Posterior vena cava (tissue), 2 donors: ENCODE measurements at regions of chr17 and their contacts with region 1.

Region 1: DNA sequence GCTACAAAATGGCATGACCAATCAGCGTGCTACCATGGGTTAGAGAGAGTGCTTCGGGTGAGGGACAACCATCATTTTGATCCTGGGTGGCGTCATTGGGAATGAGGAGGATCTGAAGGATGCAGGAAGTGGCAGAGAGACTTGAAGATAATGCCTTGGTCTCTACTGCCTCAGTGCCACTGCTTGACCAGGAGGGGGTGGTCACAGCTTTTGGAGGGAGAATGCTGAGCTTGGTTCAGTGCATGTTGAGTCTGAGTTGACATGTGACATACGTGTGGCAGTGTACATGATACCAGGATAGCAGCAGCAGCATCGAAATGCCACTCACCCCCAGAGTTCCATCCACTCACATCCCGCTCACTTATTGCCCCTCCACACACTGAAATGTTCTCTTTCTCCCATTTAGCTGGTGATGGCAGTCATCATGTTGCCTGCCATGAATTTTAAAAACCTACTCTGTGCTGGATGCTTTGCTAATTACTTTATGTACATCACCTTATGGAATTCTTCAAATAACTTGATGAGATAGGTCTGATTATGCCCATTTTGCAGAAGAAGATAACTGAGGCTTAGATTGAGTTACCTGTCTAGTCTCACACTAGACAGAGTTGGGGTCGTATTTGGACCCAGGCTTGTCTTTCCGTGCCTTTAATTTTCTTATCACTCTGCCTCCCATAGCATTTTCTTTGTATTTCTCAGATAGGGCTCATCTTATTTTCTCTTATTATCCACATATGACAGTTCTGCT is 36.7 kb downstream of the ARSG start:
- DNase-seq: no peak

Region 2: DNA sequence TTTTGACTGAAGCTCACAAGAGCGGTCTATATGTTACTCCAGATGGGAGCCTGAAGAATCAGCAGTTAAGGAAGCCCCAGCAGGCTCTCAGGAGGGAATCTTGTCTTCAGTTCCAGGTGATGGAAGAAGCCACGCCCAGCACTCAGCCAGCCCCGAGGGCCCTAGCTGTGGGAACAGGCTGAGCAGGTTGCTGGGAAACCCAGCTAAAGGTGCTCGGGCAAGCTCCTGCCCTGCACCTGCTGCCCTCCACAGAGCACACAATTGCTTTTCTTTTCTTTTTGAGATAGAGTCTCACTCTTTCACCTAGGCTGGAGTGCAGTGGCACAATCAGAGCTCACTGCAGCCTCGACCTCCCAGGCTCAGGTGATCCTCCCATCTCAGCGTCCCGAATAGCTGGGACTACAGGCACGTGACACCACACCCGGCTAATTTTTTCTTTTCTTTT is 97.0 kb after region 1 on chr17:
- intact Hi-C with region 1: no loop called
- DNase-seq: peak; percentile 37

Region 3: DNA sequence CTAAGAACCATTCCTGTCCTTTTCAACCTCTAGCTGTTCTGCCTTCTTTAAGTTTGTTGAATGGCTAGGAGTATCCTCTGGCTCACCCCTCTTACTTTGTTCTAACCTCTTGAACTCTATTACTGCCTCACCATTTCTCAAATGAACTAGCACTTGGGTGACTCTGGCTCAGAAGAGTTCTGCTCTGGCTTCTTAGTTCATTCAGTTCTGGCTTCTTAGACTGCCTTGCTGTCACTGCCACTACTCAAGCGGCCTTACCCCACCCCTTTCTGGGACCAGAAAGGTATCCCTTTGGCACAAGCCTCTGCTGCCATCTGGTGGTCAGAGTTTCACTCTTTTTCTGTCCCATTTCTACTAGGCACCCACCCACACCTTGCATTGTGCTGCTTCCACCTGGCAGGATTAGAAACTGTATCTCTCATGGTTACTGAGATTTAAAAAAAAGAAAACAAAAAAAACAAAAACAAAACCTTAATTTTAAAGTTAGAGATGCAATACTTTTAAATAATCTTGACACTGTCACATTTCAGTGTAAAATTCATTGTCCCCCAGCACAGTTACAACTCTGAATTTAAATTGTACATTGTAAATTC is 907.4 kb after region 1 on chr17:
- intact Hi-C with region 1: loop called in 1 of 2 experiments (anchors 5 kb)
- DNase-seq: peak; percentile 87